ENCODE measurements at regions of chr2 and their contacts with region 1.

Region 1: GRCh38 chr2:98608116-98608999 is at the starts of genes COA5 and UNC50:
- DNase-seq: peak; percentile 93 to 95 (median 94)
- ATAC-seq: peak; percentile 94 to 97 (median 96)
- H3K4me3 ChIP-seq: peak within 1 kb of the TSS; percentile 63 to 99 (median 87)
- H3K27ac ChIP-seq: peak within 1 kb of the TSS; percentile 89 to 100 (median 96)
- H3K4me1 ChIP-seq: peaks cover 12 to 66% (median 49%) of the 10 kb centered on the region in 12 donors
- H3K27me3 ChIP-seq: no peaks in the 10 kb centered on the region
- CTCF ChIP-seq: peak in 3 of 12 donors; percentile 23 to 27 (median 25)
- POLR2A ChIP-seq: peak in 1 of 2 donors; percentile 75
- total RNA-seq, gene COA5: 19.6 to 33.5 (median 27.7) TPM
- total RNA-seq, gene UNC50: 22.3 to 31.4 (median 25.6) TPM

Region 2: DNA sequence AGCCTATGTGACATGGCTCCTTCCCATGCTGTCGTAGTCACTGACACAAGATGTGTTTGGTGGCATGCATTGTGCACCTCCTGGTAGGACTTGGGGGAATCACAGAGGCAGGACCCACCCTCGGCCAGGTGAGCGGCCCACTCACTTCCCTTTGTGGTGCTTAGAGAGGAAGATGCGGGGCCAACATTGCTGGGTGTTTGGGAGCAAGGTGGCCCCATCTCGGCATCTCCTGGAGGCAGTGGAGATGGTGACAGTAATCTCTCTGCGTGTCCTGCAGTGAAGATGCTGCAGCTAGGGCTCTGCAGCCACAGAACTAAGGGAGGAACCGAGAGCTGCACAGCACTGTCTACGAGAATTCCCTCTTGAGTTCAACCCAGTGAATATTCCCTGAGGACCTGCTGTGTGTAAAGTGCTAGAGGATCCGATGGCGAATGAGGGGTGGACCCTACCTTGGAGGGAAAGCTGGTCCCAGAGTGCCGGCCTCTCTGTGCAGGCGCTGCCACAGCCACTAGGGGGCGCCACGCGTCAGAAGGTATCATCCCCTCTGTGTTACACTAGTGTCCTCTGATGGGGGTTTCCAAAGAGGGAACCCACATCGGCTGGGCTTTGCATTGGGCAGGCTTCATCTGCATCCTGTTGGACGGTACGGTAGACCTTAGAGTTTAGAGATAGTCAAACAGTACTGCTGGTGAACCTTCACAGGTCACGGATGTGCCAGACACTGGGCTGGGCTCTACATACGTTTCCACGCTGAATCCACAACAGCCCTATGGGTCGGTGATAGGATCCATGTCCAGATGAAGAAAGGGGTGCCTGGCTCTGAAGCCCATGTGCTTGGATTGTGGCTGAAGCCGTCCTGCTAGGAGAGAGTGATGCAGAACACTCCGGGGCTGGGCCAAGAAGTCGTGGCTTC is 39.2 kb before region 1 on chr2:
- intact Hi-C with region 1: loop called in 2 of 10 experiments (anchors 5 kb)
- DNase-seq: peak in 3 of 5 donors; percentile 39 to 49 (median 39)
- ATAC-seq: peak in 2 of 4 donors; percentile 33 to 38
- H3K4me3 ChIP-seq: no peak overlapping the region
- H3K27ac ChIP-seq: no peak overlapping the region
- H3K4me1 ChIP-seq: peaks cover 0 to 23% (median 6%) of the 10 kb centered on the region in 12 donors
- H3K27me3 ChIP-seq: no peaks in the 10 kb centered on the region
- CTCF ChIP-seq: peak; percentile 68 to 92 (median 81)
- POLR2A ChIP-seq: no peak

Region 3: DNA sequence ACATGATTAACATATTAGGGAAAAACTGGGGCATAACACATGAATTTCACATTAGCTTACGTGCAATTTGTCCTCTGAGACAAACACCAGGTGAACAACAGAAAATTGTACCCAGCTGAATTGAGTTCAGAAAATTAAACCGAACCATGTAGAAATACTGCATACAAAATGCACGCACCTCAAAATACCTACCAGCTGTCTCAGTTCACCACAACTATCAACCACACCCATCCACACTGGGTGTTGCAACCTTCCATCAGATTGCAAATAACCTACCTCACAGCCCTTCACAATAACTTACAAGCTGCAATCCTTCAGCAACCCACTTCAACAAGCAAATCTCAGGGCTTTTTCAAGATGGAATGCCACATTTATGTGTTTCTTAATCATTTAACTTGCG is 56.0 kb after region 1 on chr2:
- intact Hi-C with region 1: no loop called
- DNase-seq: no peak
- ATAC-seq: no peak
- H3K4me3 ChIP-seq: no peak overlapping the region
- H3K27ac ChIP-seq: peak overlapping the region in 1 of 12 donors; percentile 78
- H3K4me1 ChIP-seq: peaks cover 0 to 25% (median 0%) of the 10 kb centered on the region in 12 donors
- H3K27me3 ChIP-seq: no peaks in the 10 kb centered on the region
- CTCF ChIP-seq: no peak
- POLR2A ChIP-seq: no peak

Region 4: DNA sequence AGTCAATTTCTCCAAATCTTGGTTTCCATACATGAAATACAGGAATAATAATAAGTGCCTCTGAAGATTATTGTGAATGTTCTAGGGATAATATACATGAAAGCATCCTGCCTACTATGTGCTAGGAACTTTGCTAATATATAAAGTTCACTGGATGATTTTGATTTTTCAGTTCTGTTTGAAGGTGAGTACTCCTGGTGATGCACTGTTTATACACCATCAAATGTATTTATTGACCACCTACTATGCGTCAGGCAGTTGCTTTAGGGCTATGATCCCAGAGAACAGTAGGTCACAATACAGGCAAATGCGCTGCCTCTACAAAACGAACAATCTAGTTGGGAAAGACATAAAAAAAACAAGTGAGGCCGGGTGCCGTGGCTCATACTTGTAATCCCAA is 717.0 kb after region 1 on chr2:
- intact Hi-C with region 1: no loop called
- DNase-seq: no peak
- ATAC-seq: no peak
- H3K4me3 ChIP-seq: no peak overlapping the region
- H3K27ac ChIP-seq: no peak overlapping the region
- H3K4me1 ChIP-seq: no peaks in the 10 kb centered on the region
- H3K27me3 ChIP-seq: no peaks in the 10 kb centered on the region
- CTCF ChIP-seq: no peak
- POLR2A ChIP-seq: no peak

Measured in heart left ventricle (tissue), 16 donors.